Ascending aorta (tissue), 2 donors: ENCODE measurements at regions of chr9 and their contacts with region 1.

Region 1: DNA sequence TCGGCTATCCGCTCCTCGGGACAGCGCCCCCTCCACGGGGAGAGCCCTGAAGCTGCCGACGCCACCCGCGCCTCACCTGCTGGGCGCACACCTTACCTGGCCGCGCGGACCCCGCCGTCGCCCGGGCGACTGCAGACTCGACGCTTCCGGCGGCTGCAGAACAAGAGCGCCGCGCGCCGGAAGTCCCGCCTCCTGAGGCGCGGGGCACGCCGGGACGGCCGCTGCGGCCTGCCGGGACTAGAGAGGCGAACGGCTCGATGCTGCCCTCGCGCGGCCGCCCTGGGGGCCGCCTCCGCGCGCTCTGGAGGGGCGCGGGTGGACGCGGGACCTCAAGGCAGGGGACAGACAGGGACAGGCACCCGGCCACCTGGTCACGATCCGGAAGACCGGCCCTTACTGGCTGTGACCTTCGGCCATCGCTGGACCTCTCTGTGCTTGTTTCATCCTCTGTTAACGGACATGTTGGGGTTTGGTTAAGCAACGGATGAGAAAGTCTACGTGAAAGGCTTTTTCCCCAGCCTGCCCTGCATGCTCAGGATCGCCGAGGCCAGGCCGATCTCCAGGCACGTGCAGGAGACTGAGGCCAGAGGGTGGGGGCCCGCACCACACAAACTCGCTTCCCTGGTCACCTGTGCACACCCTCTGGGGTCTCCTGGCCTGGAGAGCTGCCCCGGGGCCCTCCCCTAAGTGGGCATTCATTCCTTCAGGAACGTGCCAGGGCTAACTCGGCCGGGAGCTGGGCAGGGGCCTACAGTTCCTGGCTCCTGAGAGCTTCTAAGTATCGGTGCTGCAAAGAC is at the start of gene SNAPC4:
- DNase-seq: peak; percentile 36 to 91
- H3K4me3 ChIP-seq: peak within 1 kb of the TSS; percentile 90 to 97
- H3K27ac ChIP-seq: peak within 1 kb of the TSS; percentile 6 to 50
- H3K4me1 ChIP-seq: peaks cover 10 to 13% of the 10 kb centered on the region in 2 donors
- H3K27me3 ChIP-seq: no peaks in the 10 kb centered on the region
- CTCF ChIP-seq: peak; percentile 85 to 93 (median 92)
- total RNA-seq, gene SNAPC4: 9.4 TPM

Region 2: GRCh38 chr9:136327313-136327974 is 72.8 kb before region 1 on chr9 and contains the start of gene GPSM1:
- intact Hi-C with region 1: loop called (anchors 5 kb)
- DNase-seq: no peak
- H3K4me3 ChIP-seq: peak within 1 kb of the TSS; percentile 75 to 98
- H3K27ac ChIP-seq: peak within 1 kb of the TSS; percentile 78 to 86
- H3K4me1 ChIP-seq: peaks cover 21 to 27% of the 10 kb centered on the region in 2 donors
- H3K27me3 ChIP-seq: no peaks in the 10 kb centered on the region
- CTCF ChIP-seq: peak in 1 of 3 experiments; percentile 29
- total RNA-seq, gene GPSM1: 85.1 TPM

Region 3: DNA sequence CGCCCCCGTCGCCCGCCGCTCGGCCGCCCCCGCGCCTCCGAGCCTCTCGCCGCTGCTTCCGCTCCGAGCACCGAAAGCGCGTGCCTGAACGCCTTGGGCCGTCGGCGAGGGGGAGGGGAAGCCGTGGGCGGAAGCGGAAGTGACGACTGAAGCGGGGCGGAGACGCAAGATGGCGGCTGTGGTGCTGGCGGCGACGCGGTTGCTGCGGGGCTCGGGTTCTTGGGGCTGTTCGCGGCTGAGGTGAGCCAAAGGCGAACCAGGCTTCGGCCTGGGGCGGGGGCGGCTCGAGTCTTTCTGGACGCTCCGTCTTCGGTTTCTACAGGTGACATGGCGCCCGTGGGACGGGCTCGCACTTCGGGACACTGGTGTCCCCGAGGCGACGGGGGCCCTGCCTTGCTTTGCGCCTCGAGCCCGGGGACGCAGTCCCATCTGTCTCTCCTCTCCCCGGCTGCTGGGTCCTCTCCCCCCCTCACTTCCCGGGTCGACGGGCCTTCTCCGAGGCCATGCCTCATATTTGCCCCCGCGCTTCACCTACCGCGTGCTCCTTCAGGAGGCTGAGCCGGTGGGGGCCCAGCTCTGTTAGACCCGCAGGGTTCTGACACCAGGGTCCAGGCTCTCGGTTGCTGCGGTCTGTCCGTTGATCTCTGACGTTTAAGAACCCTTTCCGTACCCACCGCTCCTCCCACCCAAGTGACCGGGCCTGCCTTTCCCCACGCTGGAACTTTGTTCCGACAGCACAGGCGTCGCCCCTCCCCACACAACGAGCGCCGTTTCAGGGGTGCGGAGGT is 10.5 kb after region 1 on chr9 and contains the starts of genes ENTR1 and PMPCA:
- intact Hi-C with region 1: loop called (anchors 1 kb)
- DNase-seq: peak; percentile 67 to 96
- H3K4me3 ChIP-seq: peak within 1 kb of the TSS; percentile 72 to 92
- H3K27ac ChIP-seq: peak within 1 kb of the TSS; percentile 77 to 80
- H3K4me1 ChIP-seq: peaks cover 9 to 19% of the 10 kb centered on the region in 2 donors
- H3K27me3 ChIP-seq: no peaks in the 10 kb centered on the region
- CTCF ChIP-seq: no peak
- total RNA-seq, gene ENTR1: 27.7 TPM
- total RNA-seq, gene PMPCA: 69.1 TPM